AG04449 (cell line): ENCODE measurements at regions of chr14 and their contacts with region 1.

Region 1: DNA sequence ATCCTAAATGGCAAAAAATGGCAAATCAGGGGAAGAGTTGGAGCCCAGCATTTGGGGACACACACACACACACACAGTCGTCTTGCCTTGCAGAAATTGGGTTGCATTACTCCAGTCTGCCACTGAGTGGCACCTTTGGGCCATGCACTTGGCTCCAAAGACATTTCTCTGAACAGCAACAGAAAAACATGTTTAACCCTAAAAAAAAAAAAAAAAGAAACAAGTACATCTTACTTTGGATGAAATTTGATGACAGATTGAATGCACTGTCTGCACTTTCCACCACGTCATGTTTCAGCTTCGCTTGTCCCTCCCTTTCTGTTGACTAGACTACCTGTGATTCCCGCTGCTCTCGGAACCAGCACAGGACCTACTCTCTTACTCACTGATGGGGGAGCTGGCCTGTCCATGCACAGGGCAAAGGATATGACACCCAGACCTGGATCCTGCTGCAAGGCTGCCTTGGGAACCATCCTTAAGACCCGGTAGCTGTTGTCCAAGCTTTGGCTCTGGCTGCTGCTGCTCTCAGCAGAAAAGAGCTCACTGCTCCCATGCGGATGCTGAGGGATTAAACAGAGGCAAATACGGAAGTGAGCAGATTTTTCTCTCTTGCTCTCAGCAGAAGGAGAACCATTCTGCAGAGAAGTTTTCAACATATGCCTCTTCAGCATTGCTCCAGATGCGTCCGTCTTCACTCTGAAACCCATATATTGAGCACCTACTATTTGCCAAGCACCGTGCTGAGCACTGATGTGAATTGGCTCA is 376.8 kb downstream of the DPF3 start:
- DNase-seq: peak; percentile 56
- H3K4me3 ChIP-seq: 0 out of 2 replicates have a peak overlapping the region, but pooled peaks have one; percentile 9
- CTCF ChIP-seq: peak; percentile 84

Region 2: GRCh38 chr14:72608391-72609204 is 91.5 kb after region 1 on chr14:
- CTCF ChIA-PET with region 1: interaction called, 12 read pairs
- POLR2A ChIA-PET with region 1: no interaction called
- DNase-seq: peak; percentile 81
- H3K4me3 ChIP-seq: peak overlapping the region; percentile 29; the same call in 1 of the 2 replicates
- CTCF ChIP-seq: no peak

Region 3: GRCh38 chr14:72781476-72782181 is 264.5 kb after region 1 on chr14:
- CTCF ChIA-PET with region 1: interaction called, 11 read pairs
- POLR2A ChIA-PET with region 1: interaction called, 3 read pairs
- DNase-seq: peak; percentile 51
- H3K4me3 ChIP-seq: no peak overlapping the region
- CTCF ChIP-seq: no peak

Region 4: GRCh38 chr14:72904840-72905561 is 387.9 kb after region 1 on chr14:
- CTCF ChIA-PET with region 1: interaction called, 299 read pairs
- POLR2A ChIA-PET with region 1: no interaction called
- DNase-seq: no peak
- H3K4me3 ChIP-seq: no peak overlapping the region
- CTCF ChIP-seq: peak; percentile 83

Region 5: GRCh38 chr14:72932893-72933292 is 415.8 kb after region 1 on chr14:
- CTCF ChIA-PET with region 1: interaction called, 160 read pairs
- POLR2A ChIA-PET with region 1: no interaction called
- DNase-seq: no peak
- H3K4me3 ChIP-seq: no peak overlapping the region
- CTCF ChIP-seq: no peak

Region 6: DNA sequence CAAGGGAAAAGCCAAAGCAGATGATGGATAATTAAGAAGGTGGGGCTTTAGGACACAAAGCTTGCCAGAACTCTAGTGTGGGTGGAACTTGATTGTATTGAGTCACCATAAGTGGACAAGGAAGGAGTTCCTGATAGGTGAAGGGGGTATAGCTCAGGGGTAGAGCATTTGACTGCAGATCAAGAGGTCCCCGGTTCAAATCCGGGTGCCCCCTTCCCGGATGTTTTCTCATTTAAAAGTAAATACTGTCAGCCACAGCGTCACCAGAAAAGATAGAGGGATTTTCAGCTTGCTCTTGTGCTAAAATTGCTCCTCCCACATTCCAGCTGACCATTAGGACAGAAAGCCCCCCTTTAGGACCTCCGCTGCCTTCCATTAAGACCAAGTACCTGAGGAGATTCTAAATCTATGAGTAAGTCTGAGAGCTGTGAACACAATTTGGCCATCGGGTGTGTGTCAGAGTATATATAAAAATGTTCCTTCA is 445.8 kb after region 1 on chr14:
- CTCF ChIA-PET with region 1: interaction called, 13 read pairs
- POLR2A ChIA-PET with region 1: interaction called, 4 read pairs
- DNase-seq: peak; percentile 19
- H3K4me3 ChIP-seq: no peak overlapping the region
- CTCF ChIP-seq: no peak